Calu3 (cell line): ENCODE measurements at regions of chr14 and their contacts with region 1.

Region 1: GRCh38 chr14:67426983-67427606 is 15.1 kb upstream of the PLEK2 start:
- DNase-seq: peak; percentile 77
- H3K4me3 Mint-ChIP-seq: no peak overlapping the region
- H3K27ac Mint-ChIP-seq: no peak overlapping the region
- H3K4me1 Mint-ChIP-seq: peaks cover 12% of the 10 kb centered on the region
- H3K27me3 Mint-ChIP-seq: peaks cover 14% of the 10 kb centered on the region
- CTCF ChIP-seq: peak; percentile 63

Region 2: DNA sequence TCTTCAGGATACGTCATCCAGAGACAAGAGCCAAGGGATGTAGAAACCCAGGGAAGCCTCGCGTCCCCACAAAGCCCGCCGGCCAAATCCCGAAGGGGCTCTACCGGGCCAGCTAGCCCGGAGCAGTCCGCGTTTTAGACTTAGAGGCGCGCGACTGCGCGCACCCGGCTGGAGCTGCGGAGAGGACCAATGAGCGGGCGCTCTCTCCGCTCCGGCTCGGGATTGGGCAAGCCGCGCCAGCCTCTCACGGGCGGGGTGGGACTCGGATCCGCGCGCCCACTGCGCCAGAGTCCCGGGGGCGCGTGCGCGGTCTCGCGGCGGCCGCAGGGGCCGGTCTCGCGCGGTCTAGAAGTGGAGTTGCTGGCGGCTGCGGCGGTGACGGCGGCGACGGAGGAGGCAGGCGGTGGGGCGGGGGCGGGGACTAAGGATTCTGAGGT is 186.1 kb before region 1 on chr14:
- CTCF ChIA-PET with region 1: no interaction called
- intact Hi-C with region 1: no loop called
- DNase-seq: peak; percentile 96
- H3K4me3 Mint-ChIP-seq: peak overlapping the region; percentile 73
- H3K27ac Mint-ChIP-seq: peak overlapping the region; percentile 63
- H3K4me1 Mint-ChIP-seq: peaks cover 18% of the 10 kb centered on the region
- H3K27me3 Mint-ChIP-seq: no peaks in the 10 kb centered on the region
- CTCF ChIP-seq: no peak

Region 3: DNA sequence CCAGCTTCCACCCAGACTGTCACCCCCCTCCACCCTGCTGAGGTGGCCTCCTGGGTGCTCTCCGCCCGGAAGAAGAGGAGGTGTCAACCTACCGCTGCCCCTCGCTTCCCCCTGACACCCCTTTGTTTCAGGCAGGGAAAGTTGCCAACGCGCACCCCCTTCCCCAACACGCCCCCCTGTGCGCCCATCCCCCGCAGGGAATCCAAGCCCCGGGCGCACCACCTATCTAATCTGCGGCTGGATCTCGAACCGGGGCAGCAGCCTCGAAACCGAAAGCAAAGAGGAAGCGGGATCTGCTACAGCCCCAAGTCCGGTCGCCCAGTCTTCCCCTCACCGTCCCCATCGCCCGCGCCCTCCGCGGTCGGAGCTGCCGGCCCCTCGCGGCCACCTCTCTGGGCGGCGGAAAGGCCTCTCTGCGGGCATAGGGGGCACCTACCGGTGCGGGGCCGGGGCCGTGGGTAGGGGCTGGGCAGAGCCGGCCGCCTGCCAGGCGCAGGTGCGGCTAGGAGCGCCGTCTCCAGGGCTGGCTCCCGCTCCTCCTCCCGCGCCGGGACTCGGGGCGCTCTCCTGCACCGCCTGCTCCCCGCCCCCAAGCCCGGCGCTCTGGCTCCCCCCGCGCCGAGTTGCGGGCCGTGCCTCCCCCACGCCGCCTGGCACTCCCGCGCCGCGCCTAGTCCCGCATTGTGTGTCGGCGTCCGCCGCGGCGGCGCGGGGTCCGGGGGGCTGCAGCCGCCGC is 87.7 kb after region 1 on chr14:
- CTCF ChIA-PET with region 1: interaction called, 10 read pairs
- intact Hi-C with region 1: no loop called
- DNase-seq: peak; percentile 40
- H3K4me3 Mint-ChIP-seq: peak overlapping the region; percentile 77
- H3K27ac Mint-ChIP-seq: no peak overlapping the region
- H3K4me1 Mint-ChIP-seq: no peaks in the 10 kb centered on the region
- H3K27me3 Mint-ChIP-seq: peaks cover 58% of the 10 kb centered on the region
- CTCF ChIP-seq: no peak

Region 4: DNA sequence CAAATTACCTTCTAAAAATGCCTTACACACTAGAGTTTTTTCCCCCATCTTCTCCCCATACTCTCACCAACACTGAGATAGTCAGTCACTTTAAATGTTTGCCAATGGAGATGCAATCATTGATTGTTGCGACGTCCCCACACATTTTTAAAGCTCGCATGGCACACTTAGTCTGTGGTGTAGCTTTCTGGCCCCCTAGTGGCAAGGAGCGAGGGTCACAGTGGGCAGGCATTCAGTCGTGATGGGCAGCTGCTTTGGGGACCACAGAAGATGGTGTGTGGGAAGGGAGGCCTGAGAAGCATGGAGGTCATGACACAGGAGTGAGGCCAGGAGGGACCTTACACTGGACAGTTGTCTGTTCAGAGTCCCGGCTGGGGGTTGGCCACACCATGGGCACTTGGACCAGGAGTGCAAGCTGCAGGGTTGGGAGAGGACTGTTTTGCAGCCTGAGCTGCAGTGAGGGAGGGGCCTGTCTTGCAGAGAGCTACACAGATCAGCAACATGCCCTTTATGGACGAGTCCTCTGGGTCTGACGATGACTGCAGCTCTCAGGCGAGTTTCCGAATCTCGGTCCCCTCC is 144.3 kb after region 1 on chr14:
- CTCF ChIA-PET with region 1: interaction called, 64 read pairs
- intact Hi-C with region 1: loop called (anchors 1 kb)
- DNase-seq: peak; percentile 68
- H3K4me3 Mint-ChIP-seq: no peak overlapping the region
- H3K27ac Mint-ChIP-seq: no peak overlapping the region
- H3K4me1 Mint-ChIP-seq: peaks cover 9% of the 10 kb centered on the region
- H3K27me3 Mint-ChIP-seq: no peaks in the 10 kb centered on the region
- CTCF ChIP-seq: peak; percentile 73

Region 5: DNA sequence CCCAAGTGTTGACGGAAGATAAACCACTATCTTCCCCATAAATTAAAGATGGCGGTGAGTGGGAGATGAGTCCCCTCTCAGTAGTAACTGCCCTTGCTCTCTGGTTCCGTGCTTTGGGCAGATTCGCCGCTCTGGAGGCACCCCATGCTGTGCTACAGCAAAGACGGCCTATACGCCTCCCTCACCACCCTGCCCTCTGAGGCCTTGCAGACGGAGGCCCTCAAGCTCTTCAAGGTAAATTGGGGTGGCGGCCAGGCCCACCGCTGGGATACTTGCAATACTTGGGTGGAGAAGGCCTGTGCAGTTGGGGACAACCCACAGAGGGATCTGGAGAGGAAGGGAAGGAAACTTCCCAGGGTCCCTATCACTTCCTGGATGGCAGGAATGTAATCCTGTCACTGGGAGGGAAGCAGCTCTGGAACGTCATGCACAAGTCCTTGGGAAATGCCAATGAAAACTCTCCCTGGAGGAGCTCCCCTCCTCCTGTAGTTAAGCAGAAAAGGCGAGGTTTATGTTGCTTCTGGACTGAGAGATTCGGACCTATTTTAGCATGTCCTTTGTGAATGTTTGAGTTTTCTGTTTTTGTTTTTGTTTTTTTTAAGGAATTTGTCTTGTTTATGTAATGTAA is 150.2 kb after region 1 on chr14:
- CTCF ChIA-PET with region 1: interaction called, 64 read pairs
- intact Hi-C with region 1: no loop called
- DNase-seq: no peak
- H3K4me3 Mint-ChIP-seq: no peak overlapping the region
- H3K27ac Mint-ChIP-seq: no peak overlapping the region
- H3K4me1 Mint-ChIP-seq: peaks cover 9% of the 10 kb centered on the region
- H3K27me3 Mint-ChIP-seq: no peaks in the 10 kb centered on the region
- CTCF ChIP-seq: no peak